Activated CD4-positive, alpha-beta T cell treated with anti-CD3 and anti-CD28 coated beads, Interleukin-2, amount 10 ng/mL, durations not matched to agents 24 days and 14 days (primary cell): ENCODE measurements at regions of chr3 and their contacts with region 1.

Region 1: DNA sequence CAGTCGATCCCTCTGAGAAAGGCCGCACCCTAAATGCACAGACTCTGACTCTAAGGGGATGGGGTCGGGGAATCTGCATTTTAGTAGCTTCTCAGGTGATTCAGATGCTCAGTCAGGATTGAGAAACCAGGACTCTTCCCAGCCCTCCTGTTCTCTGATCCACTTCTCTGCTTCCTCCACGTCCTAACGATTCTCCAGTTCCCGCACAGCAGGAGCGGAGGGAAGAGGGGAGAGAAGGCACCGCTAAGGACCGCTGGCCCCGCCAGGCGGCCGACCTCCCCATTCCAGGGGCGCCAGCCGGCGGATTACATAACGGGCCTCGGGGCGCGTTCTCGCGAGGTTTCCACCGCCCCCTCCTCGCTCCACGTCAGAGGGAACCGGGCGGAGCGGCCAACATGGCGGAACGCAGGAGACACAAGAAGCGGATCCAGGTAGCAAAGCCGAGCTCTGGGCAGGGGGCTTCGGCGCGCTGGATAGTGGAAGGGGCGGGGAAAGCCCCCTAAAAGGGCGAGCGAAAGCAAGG is at the start of gene SEC62:
- DNase-seq: peak; percentile 98
- H3K4me3 Mint-ChIP-seq: peak within 1 kb of the TSS; percentile 98
- H3K27ac Mint-ChIP-seq: peak within 1 kb of the TSS; percentile 99
- H3K4me1 Mint-ChIP-seq: peaks cover 28% of the 10 kb centered on the region
- H3K27me3 Mint-ChIP-seq: peaks cover 3% of the 10 kb centered on the region
- total RNA-seq, gene SEC62: 72.1 and 72.4 TPM in 2 replicates

Region 2: DNA sequence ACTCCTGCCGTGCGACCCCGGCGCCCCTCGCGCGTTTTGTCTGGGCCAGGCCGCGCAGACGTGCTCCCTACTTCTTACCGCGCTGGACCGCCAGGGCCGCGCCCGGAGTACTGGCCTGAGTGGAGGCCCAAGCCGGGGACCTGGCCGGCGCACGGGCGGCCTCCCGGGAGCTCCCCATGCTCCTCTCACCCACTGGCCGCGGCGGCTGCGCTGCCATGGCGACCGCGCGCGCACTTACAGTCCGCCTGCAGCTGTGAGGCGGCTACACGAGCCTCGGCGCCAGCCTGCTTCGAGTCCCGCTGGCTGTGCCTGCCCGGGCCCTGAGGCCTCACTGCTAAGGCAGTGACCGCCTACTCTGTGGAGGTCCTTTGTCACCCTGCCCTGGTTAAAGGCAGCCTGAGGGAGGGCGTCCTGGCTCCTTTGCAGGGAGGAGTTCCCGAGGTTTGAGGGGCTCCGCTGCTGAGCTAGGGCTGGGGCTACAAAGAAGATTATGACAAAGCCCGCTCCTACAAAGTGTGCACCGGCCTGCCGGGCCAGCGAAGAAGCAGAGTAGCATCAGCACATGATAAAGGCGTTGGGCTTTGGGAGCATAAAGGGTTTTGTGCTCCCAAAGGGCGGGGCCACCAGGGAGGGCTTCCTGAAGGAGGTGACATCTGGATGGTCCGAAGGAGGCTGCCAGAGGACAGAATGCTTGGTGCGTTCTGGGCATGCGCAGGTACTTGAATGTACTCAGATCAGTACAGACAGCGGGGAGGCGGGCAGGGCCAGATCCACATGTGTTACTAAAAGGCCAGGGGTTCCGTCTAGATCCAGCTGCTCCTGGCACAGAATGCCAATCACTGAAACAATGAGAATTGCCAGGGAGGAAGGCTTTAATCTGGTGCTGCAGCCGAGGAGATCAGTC is 153.9 kb before region 1 on chr3 and contains the starts of genes LRRC34 and LRRIQ4:
- intact Hi-C with region 1: loop called (anchors 1 kb)
- DNase-seq: peak; percentile 91
- H3K4me3 Mint-ChIP-seq: peak within 1 kb of the TSS; percentile 92
- H3K27ac Mint-ChIP-seq: peak within 1 kb of the TSS; percentile 91
- H3K4me1 Mint-ChIP-seq: peaks cover 40% of the 10 kb centered on the region
- H3K27me3 Mint-ChIP-seq: peaks cover 14% of the 10 kb centered on the region
- total RNA-seq, gene LRRC34: 4.7 and 5.8 TPM in 2 replicates
- total RNA-seq, gene LRRIQ4: 0.09 and 0.21 TPM in 2 replicates

Region 3: GRCh38 chr3:169998568-169999131 is 32.2 kb after region 1 on chr3:
- intact Hi-C with region 1: loop called (anchors 1 kb)
- DNase-seq: no peak
- H3K4me3 Mint-ChIP-seq: no peak overlapping the region
- H3K27ac Mint-ChIP-seq: peak overlapping the region; percentile 25
- H3K4me1 Mint-ChIP-seq: peaks cover 21% of the 10 kb centered on the region
- H3K27me3 Mint-ChIP-seq: no peaks in the 10 kb centered on the region

Region 4: DNA sequence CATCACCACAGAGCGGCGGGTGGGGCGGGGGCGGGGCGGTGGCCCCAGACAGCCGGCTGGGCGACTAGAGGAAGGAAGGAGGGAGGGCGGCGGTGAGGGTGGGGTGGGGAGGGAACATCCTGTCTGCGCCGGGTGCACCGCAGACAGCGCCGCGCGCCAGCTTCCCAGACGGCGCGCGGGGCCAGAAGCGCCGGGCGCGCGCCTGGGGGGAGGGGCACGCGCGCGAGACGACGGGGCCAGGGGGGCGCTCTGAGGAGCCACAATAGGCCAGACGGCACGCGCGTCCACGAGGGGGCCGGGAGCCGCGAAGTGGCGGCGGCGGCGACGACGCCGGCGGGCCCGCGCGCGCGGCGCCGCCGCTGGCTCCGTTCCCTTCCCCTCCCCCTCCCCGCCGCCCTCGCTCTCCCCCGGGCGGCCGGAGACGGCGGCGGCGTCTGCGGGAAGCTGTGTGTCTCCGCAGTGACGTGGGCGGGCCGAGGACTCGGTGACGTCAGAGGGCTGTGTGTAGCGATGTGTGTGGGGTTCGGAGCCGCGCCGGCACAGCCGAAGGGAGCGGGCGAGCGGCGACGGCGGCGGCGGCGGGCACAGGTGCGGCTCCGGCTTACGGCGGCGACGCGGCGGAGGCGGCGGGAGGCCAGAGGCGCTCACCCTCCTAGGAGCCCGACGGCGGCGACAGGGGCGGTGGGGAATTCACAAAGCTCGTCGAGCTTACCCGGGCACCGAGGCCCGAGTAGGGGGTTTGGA is 390.9 kb after region 1 on chr3 and contains the start of gene SKIL:
- intact Hi-C with region 1: loop called (anchors 5 kb)
- DNase-seq: peak; percentile 98
- H3K4me3 Mint-ChIP-seq: peak within 1 kb of the TSS; percentile 79
- H3K27ac Mint-ChIP-seq: peak within 1 kb of the TSS; percentile 95
- H3K4me1 Mint-ChIP-seq: peaks cover 27% of the 10 kb centered on the region
- H3K27me3 Mint-ChIP-seq: peaks cover 7% of the 10 kb centered on the region
- total RNA-seq, gene SKIL: 23.3 TPM in 2 replicates